ENCODE measurements at regions of chr1 and their contacts with region 1.

Region 1: DNA sequence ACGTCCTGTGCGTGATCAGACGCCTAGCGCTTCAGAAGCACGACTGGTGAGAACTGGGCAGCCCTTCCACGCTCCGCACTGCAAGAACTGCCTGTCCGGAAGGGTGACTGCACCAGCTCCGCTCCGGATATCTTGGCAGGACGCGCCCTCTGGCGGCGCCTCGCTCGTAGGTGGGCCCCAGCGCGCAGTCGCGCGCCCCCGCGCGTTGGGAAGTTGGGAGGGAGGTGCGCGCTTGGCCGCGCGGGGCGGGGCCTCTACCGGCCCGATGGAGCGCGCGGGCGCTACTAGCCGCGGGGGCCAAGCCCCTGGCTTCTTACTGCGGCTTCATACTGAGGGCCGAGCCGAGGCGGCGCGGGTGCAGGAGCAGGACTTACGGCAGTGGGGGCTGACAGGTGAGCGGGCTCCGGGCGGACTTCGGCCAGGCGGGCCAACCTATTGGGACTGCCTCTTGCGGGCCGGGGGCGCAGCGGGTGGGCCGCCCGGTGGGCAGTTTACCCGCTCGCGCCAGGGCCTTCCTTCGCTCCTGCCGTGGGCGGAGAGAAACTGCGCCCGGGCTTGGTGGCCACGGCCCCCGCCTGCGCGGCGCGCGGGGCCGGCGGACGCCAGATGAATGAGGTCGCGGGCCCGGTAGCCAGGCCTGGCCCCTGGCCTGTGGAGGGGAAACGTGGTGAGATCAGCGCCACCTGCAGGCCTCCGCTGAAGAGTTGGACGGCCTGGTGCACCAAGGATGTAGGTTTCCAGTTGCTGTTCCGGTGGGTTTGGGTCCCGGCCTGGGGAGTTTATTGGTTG is at the start of gene CHD1L:
- DNase-seq: peak; percentile 99
- H3K4me3 ChIP-seq: peak within 1 kb of the TSS; percentile 81 to 100 (median 99)
- H3K27ac ChIP-seq: peak within 1 kb of the TSS; percentile 84 to 94 (median 90)
- H3K4me1 ChIP-seq: peaks cover 15 to 55% (median 45%) of the 10 kb centered on the region in 6 donors
- H3K27me3 ChIP-seq: no peaks in the 10 kb centered on the region
- CTCF ChIP-seq: peak; percentile 88 to 98 (median 94)
- POLR2A ChIP-seq: peak in 1 of 3 donors; percentile 10
- total RNA-seq, gene CHD1L: 37.1 to 52.6 (median 39.8) TPM

Region 2: GRCh38 chr1:147172168-147172992 is 70.3 kb before region 1 on chr1 and contains the start of gene PRKAB2:
- intact Hi-C with region 1: loop called (anchors 5 kb)
- DNase-seq: peak; percentile 99
- H3K4me3 ChIP-seq: peak within 1 kb of the TSS; percentile 75 to 97 (median 94)
- H3K27ac ChIP-seq: peak within 1 kb of the TSS; percentile 88 to 96 (median 94)
- H3K4me1 ChIP-seq: peaks cover 0 to 54% (median 35%) of the 10 kb centered on the region in 6 donors
- H3K27me3 ChIP-seq: no peaks in the 10 kb centered on the region
- CTCF ChIP-seq: peak; percentile 76 to 99 (median 96)
- POLR2A ChIP-seq: no peak
- total RNA-seq, gene PRKAB2: 7.3 to 19.1 (median 10.5) TPM

Region 3: DNA sequence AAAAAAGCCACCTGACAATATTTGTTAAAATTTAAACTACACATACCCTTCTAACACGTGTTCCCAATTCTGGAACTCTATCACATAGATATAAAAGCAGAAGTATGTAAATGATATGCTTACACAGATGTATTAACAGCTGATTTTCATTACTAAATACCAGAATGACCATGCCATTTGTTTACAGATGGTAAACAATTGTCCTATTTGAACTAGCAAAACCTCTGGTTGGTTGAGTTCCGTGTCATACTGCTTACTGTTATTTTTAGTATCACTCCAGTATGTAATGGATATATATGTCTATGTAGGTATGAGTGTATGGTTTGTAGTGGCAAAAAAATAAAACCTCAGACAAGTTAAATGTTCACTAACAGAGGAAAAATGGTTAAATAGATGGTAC is 70.6 kb after region 1 on chr1:
- intact Hi-C with region 1: no loop called
- DNase-seq: no peak
- H3K4me3 ChIP-seq: no peak overlapping the region
- H3K27ac ChIP-seq: no peak overlapping the region
- H3K4me1 ChIP-seq: no peaks in the 10 kb centered on the region
- H3K27me3 ChIP-seq: no peaks in the 10 kb centered on the region
- CTCF ChIP-seq: no peak
- POLR2A ChIP-seq: no peak

Measured in spleen (tissue), 13 donors.